ENCODE measurements at regions of chr1 and their contacts with region 1.

Region 1: DNA sequence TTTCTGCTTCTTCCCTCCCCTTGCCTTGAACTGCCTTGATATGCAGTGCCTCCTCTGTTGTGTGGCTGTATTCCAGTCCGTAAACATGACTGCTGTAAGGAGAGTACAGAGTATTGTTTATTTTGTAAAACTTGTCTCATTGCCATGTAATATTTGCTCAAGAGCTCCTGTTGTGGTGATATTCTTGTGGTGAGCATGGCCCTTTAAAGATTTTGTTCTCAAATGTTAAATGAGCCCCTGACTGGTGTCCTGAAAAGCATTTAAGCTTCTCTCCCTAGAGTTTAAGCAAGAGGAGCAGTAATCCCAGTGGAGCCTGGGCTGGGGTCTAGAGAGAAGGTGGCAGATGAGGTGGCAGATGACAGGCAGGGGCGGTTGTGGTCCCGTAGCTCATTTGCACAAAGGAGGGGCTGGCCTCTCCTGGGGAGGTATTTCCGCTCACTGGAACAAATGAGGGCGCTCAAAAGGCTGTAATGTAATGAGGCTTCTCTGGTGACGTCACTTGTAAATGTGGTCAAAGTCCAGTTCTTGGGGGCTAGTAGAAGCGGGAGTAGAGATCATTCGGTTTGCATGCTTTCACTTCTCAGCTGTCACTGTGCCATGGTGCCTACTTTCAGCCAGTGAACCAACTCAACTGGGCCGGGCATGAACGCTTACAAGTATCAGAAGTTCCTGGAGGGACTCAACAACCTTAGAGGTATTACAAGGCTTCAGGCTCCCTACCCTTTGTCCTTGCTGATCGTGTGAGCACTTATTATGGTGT is 46.0 kb upstream of the MACF1 start:
- DNase-seq: peak; percentile 99
- ATAC-seq: peak; percentile 95
- H3K4me3 ChIP-seq: peak overlapping the region; percentile 64 to 71 (median 69)
- H3K27ac ChIP-seq: peak overlapping the region; percentile 87
- H3K4me1 ChIP-seq: peaks cover 69% of the 10 kb centered on the region
- H3K27me3 ChIP-seq: no peaks in the 10 kb centered on the region; a peak in 1 of 5 replicates
- CTCF ChIP-seq: no peak; the same call in 1 of the 2 replicates
- EP300 ChIP-seq: 0 out of 4 replicates have a peak, but pooled peaks have one; percentile 8 to 25
- POLR2A ChIP-seq: peak; percentile 59 to 75; a peak in 3 of 4 replicates
- RAD21 ChIP-seq: no peak

Region 2: DNA sequence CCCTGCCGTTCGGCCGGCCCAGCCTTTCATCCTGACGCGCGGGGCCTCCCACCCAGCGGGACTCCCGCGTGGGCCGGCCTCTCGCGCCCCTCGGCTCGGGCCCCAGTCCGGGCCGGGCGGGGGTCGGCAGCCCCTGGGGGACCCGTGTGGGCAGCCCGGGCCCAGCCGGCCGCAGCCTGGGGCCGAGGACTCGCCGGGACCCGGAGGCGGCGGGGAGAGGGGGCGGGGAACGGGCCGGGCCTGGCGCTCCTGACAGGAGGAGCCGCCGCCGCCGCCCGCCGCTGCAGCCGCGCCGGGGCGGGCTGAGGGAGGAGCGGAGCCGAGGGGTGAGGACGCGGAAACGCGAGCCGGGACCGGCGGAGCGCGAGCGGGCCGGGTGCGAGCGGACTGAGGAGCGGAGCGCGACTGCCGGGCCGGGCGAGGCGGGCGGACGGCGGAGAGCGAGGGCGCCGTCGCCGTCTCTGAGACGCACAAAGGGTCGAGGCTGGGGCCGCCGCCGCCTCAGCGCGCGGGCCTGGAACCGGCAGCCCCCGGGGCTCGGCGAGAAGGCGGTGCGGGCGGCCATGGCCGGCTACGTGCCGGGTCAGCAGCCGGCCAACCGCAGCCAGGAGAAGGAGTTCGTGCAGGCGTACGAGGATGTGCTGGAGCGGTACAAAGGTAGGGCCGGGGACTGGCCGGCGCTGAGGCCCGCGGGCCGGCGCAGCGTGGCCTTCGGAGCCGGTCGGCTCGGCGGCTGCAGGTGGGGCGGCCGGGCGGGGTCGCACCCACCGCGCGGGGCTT is 53.3 kb before region 1 on chr1:
- CTCF ChIA-PET with region 1: no interaction called
- POLR2A ChIA-PET with region 1: interaction called, 27 read pairs
- in situ Hi-C with region 1: no loop called
- intact Hi-C with region 1: loop called (anchors 1 kb)
- DNase-seq: no peak
- ATAC-seq: peak; percentile 76
- H3K4me3 ChIP-seq: peak overlapping the region; percentile 81 to 94 (median 93)
- H3K27ac ChIP-seq: peak overlapping the region; percentile 69
- H3K4me1 ChIP-seq: peaks cover 57% of the 10 kb centered on the region
- H3K27me3 ChIP-seq: no peaks in the 10 kb centered on the region
- CTCF ChIP-seq: no peak
- EP300 ChIP-seq: no peak
- POLR2A ChIP-seq: no peak
- RAD21 ChIP-seq: no peak

Region 3: GRCh38 chr1:39132505-39133339 is 25.8 kb before region 1 on chr1:
- CTCF ChIA-PET with region 1: no interaction called
- POLR2A ChIA-PET with region 1: interaction called, 22 read pairs
- in situ Hi-C with region 1: no loop called
- intact Hi-C with region 1: no loop called
- DNase-seq: peak; percentile 85
- ATAC-seq: peak; percentile 98
- H3K4me3 ChIP-seq: peak overlapping the region in 1 of 3 experiments; percentile 24; a peak in 1 of 6 replicates
- H3K27ac ChIP-seq: peak overlapping the region; percentile 52
- H3K4me1 ChIP-seq: peaks cover 42% of the 10 kb centered on the region
- H3K27me3 ChIP-seq: no peaks in the 10 kb centered on the region
- CTCF ChIP-seq: peak; percentile 86
- EP300 ChIP-seq: no peak
- POLR2A ChIP-seq: no peak
- RAD21 ChIP-seq: peak; percentile 67

Region 4: GRCh38 chr1:39183503-39184353 is 25.2 kb after region 1 on chr1:
- CTCF ChIA-PET with region 1: no interaction called
- POLR2A ChIA-PET with region 1: interaction called, 12 read pairs
- in situ Hi-C with region 1: no loop called
- intact Hi-C with region 1: no loop called
- DNase-seq: peak; percentile 90
- ATAC-seq: peak; percentile 94
- H3K4me3 ChIP-seq: no peak overlapping the region
- H3K27ac ChIP-seq: peak overlapping the region; percentile 27
- H3K4me1 ChIP-seq: peaks cover 33% of the 10 kb centered on the region
- H3K27me3 ChIP-seq: no peaks in the 10 kb centered on the region
- CTCF ChIP-seq: peak; percentile 62
- EP300 ChIP-seq: peak in 1 of 2 experiments; percentile 35; a peak in 1 of 4 replicates
- POLR2A ChIP-seq: no peak
- RAD21 ChIP-seq: peak; percentile 37; the same call in 1 of the 2 replicates

Region 5: GRCh38 chr1:39214998-39215873 is 56.7 kb after region 1 on chr1:
- CTCF ChIA-PET with region 1: no interaction called
- POLR2A ChIA-PET with region 1: interaction called, 10 read pairs
- in situ Hi-C with region 1: no loop called
- intact Hi-C with region 1: no loop called
- DNase-seq: peak; percentile 62
- ATAC-seq: peak; percentile 41
- H3K4me3 ChIP-seq: peak overlapping the region; percentile 43 to 68 (median 48)
- H3K27ac ChIP-seq: peak overlapping the region; percentile 93
- H3K4me1 ChIP-seq: peaks cover 76% of the 10 kb centered on the region
- H3K27me3 ChIP-seq: no peaks in the 10 kb centered on the region
- CTCF ChIP-seq: no peak
- EP300 ChIP-seq: 0 out of 4 replicates have a peak, but pooled peaks of 1 of the 2 experiments have one; percentile 19
- POLR2A ChIP-seq: no peak; a peak in 1 of 4 replicates
- RAD21 ChIP-seq: no peak